PC-3 (cell line): ENCODE measurements at regions of chr5 and their contacts with region 1.

Region 1: DNA sequence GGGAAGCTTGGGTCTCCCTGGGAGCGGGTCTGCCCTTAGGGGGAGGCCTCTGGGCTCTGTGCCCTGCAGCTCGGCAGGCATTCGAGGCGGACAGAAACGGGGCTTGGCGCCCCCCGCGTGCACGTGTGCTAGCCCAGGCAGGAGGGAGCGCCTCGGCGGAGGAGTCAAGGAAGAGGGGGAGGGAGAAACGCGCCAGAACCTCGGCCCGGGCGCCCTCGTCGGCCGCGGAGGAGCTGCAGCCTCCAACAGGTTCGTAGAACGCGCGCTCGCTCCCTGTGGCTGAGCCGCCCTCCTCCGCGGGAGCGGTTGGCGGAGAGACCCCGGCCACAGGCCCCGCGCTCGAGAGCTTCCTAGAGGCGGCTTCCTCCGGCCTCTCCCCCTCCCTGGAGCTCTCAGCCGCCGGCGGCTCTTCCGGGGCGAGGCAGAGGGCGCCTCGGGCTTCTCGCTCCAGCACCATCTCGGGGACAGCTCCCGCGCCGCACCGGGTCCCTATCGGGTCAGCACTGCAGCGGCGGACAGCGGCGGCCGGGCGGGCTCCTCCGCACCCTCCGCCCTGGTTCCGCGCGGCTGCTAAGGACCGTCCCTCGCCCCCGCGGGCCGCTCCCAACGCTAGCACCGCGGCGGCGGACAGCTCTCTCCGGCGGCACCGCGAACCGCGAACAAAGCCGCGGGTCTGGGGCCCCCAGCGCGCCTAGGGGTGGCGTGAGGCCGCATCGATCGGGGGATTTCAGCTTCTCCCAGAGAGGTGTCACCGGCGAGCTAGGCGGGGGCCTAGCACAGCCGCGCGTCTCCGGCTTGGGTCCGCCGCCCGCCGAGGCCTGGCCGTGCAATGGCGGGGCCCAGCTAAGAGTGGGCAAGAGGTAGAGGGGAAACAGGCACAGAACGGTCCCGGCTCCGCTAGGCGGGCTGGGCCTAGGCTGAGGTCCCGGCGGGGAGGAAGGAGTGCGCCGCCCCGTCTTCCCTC is 74.6 kb upstream of the CPLX2 start:
- DNase-seq: peak; percentile 80
- ATAC-seq: peak; percentile 97
- H3K4me3 ChIP-seq: peak overlapping the region; percentile 65
- H3K27ac ChIP-seq: no peak overlapping the region
- H3K4me1 ChIP-seq: peaks cover 12% of the 10 kb centered on the region; the same call in 1 of the 2 replicates
- H3K27me3 ChIP-seq: peaks cover 9% of the 10 kb centered on the region; the same call in 1 of the 2 replicates
- CTCF ChIP-seq: no peak

Region 2: DNA sequence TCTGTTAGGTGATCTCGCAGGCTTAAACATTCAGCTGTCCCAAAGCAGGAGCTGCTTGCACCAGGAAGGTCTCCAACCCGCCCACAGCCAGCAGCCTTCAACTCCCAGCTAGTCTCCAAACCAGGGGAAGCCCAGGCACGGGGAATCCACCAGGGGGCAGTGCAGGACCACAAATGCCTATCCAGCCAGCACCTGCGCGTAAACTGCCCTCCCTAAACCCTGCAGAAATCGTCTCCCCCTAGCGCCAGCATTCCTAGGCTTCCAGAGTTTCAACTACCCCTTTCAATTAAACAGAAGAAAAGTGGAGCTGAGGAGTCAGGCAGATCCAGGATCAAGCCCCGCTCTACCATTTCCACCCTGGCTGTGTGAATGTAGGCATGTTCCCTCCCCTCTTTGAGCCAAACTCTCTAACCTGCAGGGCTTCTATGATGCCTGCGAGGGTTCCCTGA is 67.0 kb before region 1 on chr5:
- CTCF ChIA-PET with region 1: no interaction called
- POLR2A ChIA-PET with region 1: no interaction called
- intact Hi-C with region 1: no loop called
- DNase-seq: peak; percentile 91
- ATAC-seq: peak; percentile 98
- H3K4me3 ChIP-seq: no peak overlapping the region
- H3K27ac ChIP-seq: no peak overlapping the region
- H3K4me1 ChIP-seq: peaks cover 3% of the 10 kb centered on the region; the same call in 1 of the 2 replicates
- H3K27me3 ChIP-seq: no peaks in the 10 kb centered on the region
- CTCF ChIP-seq: peak; percentile 95

Region 3: GRCh38 chr5:175746851-175747250 is 50.0 kb before region 1 on chr5:
- CTCF ChIA-PET with region 1: no interaction called
- POLR2A ChIA-PET with region 1: no interaction called
- intact Hi-C with region 1: loop called (anchors 5 kb)
- DNase-seq: peak; percentile 25
- ATAC-seq: peak; percentile 55; the same call in 1 of the 2 replicates
- H3K4me3 ChIP-seq: no peak overlapping the region
- H3K27ac ChIP-seq: no peak overlapping the region
- H3K4me1 ChIP-seq: no peaks in the 10 kb centered on the region
- H3K27me3 ChIP-seq: no peaks in the 10 kb centered on the region
- CTCF ChIP-seq: no peak

Region 4: GRCh38 chr5:175809531-175810121 is 12.8 kb after region 1 on chr5:
- CTCF ChIA-PET with region 1: no interaction called
- POLR2A ChIA-PET with region 1: interaction called, 5 read pairs
- intact Hi-C with region 1: loop called (anchors 1 kb)
- DNase-seq: peak; percentile 97
- ATAC-seq: peak; percentile 82
- H3K4me3 ChIP-seq: no peak overlapping the region
- H3K27ac ChIP-seq: peak overlapping the region; percentile 59
- H3K4me1 ChIP-seq: peaks cover 51% of the 10 kb centered on the region
- H3K27me3 ChIP-seq: no peaks in the 10 kb centered on the region
- CTCF ChIP-seq: no peak

Region 5: DNA sequence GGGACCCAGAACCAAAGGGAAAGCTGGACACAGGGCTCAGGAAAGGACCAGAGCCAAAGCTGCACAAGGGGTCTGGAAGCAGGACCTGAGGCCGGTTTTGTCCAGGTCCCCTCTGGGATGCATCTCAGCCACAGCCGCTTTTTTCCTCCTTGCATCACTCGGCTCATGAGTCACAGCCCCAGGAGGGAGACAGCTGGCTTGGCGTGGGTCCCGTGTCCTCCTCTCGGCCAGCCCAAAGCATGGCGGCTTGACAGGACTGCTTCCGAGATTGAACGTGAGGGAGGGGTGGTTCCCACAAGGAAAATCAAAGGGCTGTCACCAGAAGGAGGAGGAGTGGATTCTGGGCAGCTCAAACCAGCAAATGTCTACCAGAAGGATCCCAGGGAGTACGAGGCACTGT is 17.9 kb after region 1 on chr5:
- CTCF ChIA-PET with region 1: no interaction called
- POLR2A ChIA-PET with region 1: interaction called, 5 read pairs
- intact Hi-C with region 1: loop called (anchors 1 kb)
- DNase-seq: peak; percentile 89
- ATAC-seq: peak; percentile 45
- H3K4me3 ChIP-seq: peak overlapping the region; percentile 10; the same call in 1 of the 2 replicates
- H3K27ac ChIP-seq: peak overlapping the region; percentile 87
- H3K4me1 ChIP-seq: peaks cover 49% of the 10 kb centered on the region
- H3K27me3 ChIP-seq: no peaks in the 10 kb centered on the region
- CTCF ChIP-seq: no peak

Region 6: DNA sequence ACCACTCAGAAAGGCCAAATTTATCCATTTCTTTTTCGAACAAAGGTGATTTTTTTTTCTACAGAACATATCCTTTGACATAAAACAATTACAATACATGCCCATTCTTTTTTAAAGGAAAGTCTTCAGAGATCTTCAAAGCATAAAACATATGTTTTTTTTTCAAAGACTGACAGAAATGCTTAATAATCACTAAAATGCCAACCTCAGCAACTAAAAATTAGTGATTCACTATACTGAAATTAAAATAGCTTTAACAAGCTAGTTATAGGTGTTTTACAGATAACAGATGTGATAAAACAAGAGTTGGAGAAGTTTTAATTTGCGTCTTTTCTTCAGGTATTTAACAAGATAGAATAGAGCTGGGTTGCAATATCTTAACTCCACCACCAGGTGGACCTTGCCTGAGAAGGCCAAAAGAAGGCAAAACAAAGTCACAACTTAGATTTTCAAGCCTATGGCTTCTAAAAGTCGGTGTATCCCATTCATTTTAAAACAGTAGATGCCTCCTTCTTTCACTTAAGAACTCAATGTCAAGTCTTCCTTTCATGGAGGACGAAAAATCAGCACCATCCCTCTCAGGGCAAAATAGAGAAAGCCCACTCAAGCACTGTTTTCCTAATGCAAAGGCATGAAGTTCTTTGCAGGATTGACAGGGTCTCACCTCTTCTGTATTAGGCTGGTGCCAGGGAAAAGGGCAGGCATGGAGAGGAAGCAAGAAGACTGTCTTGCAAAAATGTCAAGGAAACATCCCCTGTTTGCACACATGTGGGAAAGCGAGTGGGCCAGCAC is 43.4 kb after region 1 on chr5:
- CTCF ChIA-PET with region 1: no interaction called
- POLR2A ChIA-PET with region 1: no interaction called
- intact Hi-C with region 1: loop called (anchors 10 kb)
- DNase-seq: peak; percentile 34
- ATAC-seq: no peak
- H3K4me3 ChIP-seq: no peak overlapping the region
- H3K27ac ChIP-seq: no peak overlapping the region
- H3K4me1 ChIP-seq: peaks cover 11% of the 10 kb centered on the region
- H3K27me3 ChIP-seq: no peaks in the 10 kb centered on the region
- CTCF ChIP-seq: peak; percentile 62